ENCODE measurements at regions of chr16 and their contacts with region 1.

Region 1: DNA sequence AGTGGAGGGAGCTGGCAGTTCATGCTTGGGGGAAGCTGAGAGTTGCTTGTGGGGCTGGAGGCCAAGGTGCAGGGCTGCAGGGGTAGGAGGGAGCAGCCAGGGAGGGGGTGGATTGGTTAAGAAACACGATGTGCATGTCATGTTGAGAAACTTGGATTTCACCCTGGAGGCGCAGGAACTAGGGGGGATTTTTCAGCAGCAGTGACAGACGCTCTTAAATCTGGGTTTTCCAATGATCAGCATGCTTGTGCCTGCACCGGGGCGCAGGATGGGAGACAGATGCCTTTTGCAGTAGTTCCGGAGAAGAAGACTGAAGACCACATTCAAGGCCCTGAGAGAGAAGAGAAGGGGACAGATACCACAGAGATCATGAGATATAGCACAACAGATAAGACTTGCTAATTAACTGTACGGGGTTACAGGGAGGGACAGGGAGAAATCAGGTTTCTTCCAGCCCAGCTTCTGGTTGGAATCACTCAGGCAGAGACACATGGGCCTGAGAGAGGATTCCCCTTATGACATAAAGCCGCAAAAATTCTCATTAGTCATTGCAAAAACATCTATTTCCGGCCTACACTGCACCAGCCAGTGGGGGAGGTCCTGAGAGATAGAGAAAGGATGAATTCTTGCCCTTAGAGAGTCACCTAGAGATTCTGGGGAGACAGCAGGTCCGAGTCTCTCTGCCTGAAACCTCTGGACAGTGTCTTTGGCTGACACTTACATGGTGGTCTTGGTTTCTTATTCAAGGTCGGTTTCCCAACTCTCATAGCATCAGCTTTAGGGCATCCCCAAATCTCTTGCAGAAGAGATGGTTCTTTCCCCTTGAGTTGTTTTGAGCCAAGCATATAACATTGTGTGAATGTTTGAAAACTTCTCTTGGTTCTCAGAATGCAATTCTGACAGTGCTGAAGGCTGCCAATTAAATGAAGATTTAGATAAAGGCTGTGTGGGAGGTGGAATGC is 27.1 kb downstream of the CDH13 start:
- DNase-seq: peak; percentile 44 to 66
- ATAC-seq: peak; percentile 94 to 96
- H3K4me3 ChIP-seq: no peak overlapping the region
- H3K27ac ChIP-seq: peak overlapping the region; percentile 47 to 78; a peak in 5 of 6 replicates
- H3K4me1 ChIP-seq: peaks cover 20% of the 10 kb centered on the region
- CTCF ChIP-seq: no peak
- EP300 ChIP-seq: no peak
- POLR2A ChIP-seq: no peak
- RAD21 ChIP-seq: no peak

Region 2: GRCh38 chr16:82639666-82640336 is 14.0 kb before region 1 on chr16:
- CTCF ChIA-PET with region 1: interaction called, 21 read pairs
- POLR2A ChIA-PET with region 1: no interaction called
- DNase-seq: peak; percentile 22 to 55
- ATAC-seq: peak; percentile 71 to 93; a peak in 5 of 6 replicates
- H3K4me3 ChIP-seq: no peak overlapping the region
- H3K27ac ChIP-seq: no peak overlapping the region
- H3K4me1 ChIP-seq: no peaks in the 10 kb centered on the region
- CTCF ChIP-seq: peak; percentile 61
- EP300 ChIP-seq: no peak
- POLR2A ChIP-seq: no peak
- RAD21 ChIP-seq: peak; percentile 37 to 49; a peak in 3 of 5 replicates

Measured in A549 (cell line).